ENCODE measurements at regions of chr17 and their contacts with region 1.

Region 1: GRCh38 chr17:8073627-8074484 is 13.7 kb downstream of the ALOX12B start:
- DNase-seq: peak; percentile 87
- ATAC-seq: peak; percentile 87
- H3K4me3 Mint-ChIP-seq: peak overlapping the region; percentile 54
- H3K27ac Mint-ChIP-seq: no peak overlapping the region
- H3K4me1 Mint-ChIP-seq: peaks cover 22% of the 10 kb centered on the region
- H3K27me3 Mint-ChIP-seq: peaks cover 52% of the 10 kb centered on the region

Region 2: DNA sequence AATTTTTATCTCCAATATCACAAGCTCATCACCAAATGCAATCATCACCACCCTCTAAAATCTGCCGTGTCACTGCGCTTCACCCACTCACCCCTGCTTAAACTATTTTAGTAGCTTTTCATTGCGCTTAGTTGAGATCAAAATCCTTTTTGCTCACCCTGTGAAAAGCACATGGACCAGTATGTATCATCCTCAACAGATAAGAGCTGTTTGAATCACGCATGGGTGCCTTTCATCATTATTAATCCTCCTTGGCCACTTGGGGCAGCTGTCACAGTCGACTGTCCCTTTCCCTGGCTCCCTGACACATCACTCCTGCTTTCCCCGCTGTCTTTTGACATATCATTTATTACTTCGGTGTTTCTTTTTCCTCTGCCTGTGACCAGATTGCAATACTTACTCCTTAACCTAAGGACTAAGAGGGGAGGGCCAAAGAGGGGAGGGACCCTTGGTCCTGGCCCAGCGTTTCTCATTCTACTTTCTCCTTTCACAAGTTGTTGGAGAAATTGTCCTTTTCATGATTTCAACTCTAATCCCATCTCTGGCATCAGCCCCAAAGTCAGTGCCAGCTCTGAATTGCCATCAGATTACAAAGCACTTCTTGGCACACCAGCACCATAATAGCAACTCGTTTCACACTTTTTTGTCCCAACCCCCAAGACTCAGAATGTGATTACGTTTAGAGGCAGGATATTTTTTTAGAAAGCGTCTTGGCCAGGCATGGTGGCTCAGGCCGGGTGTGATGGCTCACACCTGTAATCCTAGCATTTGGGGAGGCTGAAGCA is 248.5 kb before region 1 on chr17:
- CTCF ChIA-PET with region 1: no interaction called
- POLR2A ChIA-PET with region 1: no interaction called
- DNase-seq: no peak
- ATAC-seq: no peak
- H3K4me3 Mint-ChIP-seq: no peak overlapping the region
- H3K27ac Mint-ChIP-seq: no peak overlapping the region
- H3K4me1 Mint-ChIP-seq: no peaks in the 10 kb centered on the region
- H3K27me3 Mint-ChIP-seq: peaks cover 18% of the 10 kb centered on the region

Region 3: DNA sequence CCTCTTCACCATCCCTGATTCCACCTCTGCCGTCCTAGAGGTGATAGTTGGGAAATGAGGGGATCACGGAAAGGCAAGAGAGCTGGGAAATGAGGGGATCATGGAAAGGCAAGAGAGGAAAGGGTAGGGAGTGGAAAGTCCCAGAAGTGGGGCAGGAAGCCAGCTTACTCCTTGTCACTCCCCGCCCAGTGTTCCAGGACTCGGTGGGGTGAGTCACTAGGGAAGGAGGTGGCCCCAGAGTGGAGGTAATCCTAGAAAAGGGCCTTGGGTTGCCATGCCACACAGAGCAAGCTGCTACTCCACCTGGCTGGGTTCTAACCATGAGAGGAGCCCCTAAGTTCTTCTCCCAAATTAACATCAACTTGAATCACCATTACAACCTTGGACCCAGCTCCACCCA is 29.7 kb after region 1 on chr17:
- CTCF ChIA-PET with region 1: interaction called, 14 read pairs
- POLR2A ChIA-PET with region 1: no interaction called
- DNase-seq: no peak
- ATAC-seq: no peak
- H3K4me3 Mint-ChIP-seq: no peak overlapping the region
- H3K27ac Mint-ChIP-seq: no peak overlapping the region
- H3K4me1 Mint-ChIP-seq: peaks cover 6% of the 10 kb centered on the region
- H3K27me3 Mint-ChIP-seq: peaks cover 8% of the 10 kb centered on the region

Region 4: DNA sequence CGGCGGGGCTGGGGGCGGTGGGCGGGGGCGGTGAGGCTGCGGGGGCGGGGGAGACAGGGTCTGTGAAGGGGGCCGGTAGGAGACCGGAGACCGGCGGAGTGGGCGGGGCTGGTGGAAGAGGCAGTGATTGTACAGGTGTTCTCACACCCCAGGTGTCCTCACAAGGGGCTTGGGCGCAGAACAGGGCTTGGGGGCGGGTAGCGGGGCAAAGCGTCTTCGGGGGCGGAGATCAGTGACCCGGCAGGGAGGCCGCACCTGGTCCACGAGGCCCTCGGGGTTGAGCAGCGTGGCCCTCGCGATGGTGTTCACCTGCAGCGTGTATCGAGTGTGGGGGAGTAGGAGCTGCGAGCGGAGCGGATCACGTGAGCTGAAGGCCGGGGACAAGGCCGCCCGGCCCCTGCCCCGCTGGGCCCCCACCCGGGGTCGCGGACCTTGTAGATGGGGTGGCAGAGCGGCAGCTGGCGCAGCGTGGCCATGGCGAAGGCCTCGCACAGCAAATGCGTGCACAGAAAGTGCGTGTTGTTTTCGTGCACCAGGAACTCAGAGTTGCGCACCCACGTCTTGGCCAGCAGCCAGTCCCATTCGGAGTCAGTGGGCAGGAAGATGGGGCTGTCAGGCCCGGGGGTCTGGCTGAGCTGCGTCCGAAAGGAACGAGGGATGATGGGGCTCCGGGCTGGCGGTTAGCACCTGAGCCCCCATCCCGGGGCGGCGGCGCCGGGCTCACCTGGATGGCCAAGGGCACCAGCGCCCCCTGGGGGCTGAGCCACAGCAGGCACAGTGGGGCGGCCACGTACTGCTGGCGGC is 36.0 kb after region 1 on chr17:
- CTCF ChIA-PET with region 1: interaction called, 25 read pairs
- POLR2A ChIA-PET with region 1: no interaction called
- DNase-seq: peak; percentile 81
- ATAC-seq: peak; percentile 98
- H3K4me3 Mint-ChIP-seq: peak overlapping the region; percentile 41
- H3K27ac Mint-ChIP-seq: no peak overlapping the region
- H3K4me1 Mint-ChIP-seq: peaks cover 13% of the 10 kb centered on the region
- H3K27me3 Mint-ChIP-seq: peaks cover 34% of the 10 kb centered on the region